ENCODE measurements at regions of chr6 and their contacts with region 1.

Region 1: DNA sequence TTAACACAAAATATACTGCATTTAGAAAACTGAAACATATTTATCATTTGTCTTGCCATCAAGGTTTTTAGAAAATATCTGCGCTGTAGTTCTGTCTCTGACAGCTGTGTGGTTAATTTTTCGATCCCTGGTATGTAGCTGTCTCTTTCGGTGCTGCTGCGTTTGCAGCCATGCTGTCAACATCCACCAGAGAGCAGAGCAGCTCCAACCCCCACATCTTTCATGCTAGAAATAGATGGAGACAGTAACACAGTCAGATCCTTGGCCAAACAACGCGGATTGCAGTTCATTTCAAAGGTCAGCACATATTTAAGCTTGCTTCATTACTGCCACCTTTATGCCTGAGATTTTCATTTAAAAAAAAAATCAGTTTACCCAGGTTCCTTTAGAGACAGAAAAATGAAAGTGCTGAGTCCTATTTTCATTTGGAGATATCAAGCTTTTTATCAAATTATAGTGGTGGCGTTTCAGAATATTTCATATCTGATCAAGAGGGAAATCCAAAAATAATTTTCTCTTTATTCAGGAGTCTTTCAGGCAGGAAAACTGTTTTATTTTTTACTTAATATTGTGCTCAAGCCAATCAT is 157.7 kb upstream of the MMS22L start:
- DNase-seq: peak in 1 of 2 donors; percentile 8
- ATAC-seq: peak in 3 of 8 donors; percentile 56 to 73 (median 65)
- H3K4me3 ChIP-seq: no peak overlapping the region
- H3K27ac ChIP-seq: no peak overlapping the region
- H3K4me1 ChIP-seq: peaks cover 0 to 5% (median 0%) of the 10 kb centered on the region in 9 donors
- H3K27me3 ChIP-seq: no peaks in the 10 kb centered on the region
- CTCF ChIP-seq: peak in 6 of 9 donors; percentile 23 to 54 (median 35)

Region 2: GRCh38 chr6:97068211-97068610 is 372.5 kb before region 1 on chr6:
- intact Hi-C with region 1: loop called in 1 of 10 experiments (anchors 5 kb)
- DNase-seq: no peak
- ATAC-seq: no peak
- H3K4me3 ChIP-seq: no peak overlapping the region
- H3K27ac ChIP-seq: no peak overlapping the region
- H3K4me1 ChIP-seq: no peaks in the 10 kb centered on the region
- H3K27me3 ChIP-seq: peaks cover 0 to 4% (median 0%) of the 10 kb centered on the region in 7 donors
- CTCF ChIP-seq: peak in 7 of 9 donors; percentile 36 to 66 (median 52)

Region 3: GRCh38 chr6:97177905-97178304 is 262.8 kb before region 1 on chr6:
- intact Hi-C with region 1: no loop called
- DNase-seq: no peak
- ATAC-seq: no peak
- H3K4me3 ChIP-seq: no peak overlapping the region
- H3K27ac ChIP-seq: no peak overlapping the region
- H3K4me1 ChIP-seq: peaks cover 0 to 5% (median 0%) of the 10 kb centered on the region in 9 donors
- H3K27me3 ChIP-seq: no peaks in the 10 kb centered on the region
- CTCF ChIP-seq: no peak

Measured in heart right ventricle (tissue), 16 donors.